Aorta (tissue), 5 donors: ENCODE measurements at regions of chr3 and their contacts with region 1.

Region 1: DNA sequence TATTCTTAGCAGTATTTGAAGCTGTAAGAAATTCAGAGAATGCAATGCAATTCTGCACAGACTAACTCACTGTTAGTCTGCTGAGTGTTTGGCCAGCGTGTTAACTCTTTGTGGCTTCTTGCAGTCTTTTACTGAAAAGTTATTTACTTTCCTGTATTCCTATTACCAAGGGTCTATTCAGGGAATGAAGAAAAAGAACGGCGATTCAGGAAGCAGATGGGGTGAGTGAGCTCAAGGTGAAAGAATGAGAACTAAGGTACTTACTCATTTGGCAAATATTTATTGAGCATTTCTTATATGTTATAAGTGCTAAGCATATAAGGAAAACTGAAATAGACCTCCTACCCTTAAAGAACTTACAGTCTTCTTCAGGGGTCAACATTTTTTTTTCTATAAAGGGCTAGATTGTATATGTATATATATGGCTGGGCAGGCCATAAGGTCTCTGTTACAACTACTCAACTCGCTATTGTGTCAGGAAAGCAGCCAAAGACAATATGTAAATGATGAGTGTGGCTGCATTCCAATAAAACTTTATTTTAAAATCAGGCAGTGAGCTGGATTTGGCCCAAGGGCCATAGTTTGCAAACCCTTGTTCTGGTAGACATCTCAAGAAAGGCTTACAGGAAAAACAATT is 271.9 kb upstream of the GADL1 start:
- DNase-seq: peak in 1 of 2 donors; percentile 58
- ATAC-seq: no peak
- H3K4me3 ChIP-seq: no peak overlapping the region
- H3K27ac ChIP-seq: peak overlapping the region; percentile 28 to 82
- H3K4me1 ChIP-seq: peaks cover 5 to 6% of the 10 kb centered on the region in 2 donors
- H3K27me3 ChIP-seq: no peaks in the 10 kb centered on the region

Region 2: GRCh38 chr3:30835667-30836066 is 330.7 kb before region 1 on chr3:
- intact Hi-C with region 1: no loop called
- DNase-seq: no peak
- ATAC-seq: no peak
- H3K4me3 ChIP-seq: no peak overlapping the region
- H3K27ac ChIP-seq: no peak overlapping the region
- H3K4me1 ChIP-seq: no peaks in the 10 kb centered on the region
- H3K27me3 ChIP-seq: no peaks in the 10 kb centered on the region

Region 3: GRCh38 chr3:31219131-31219843 is 52.9 kb after region 1 on chr3:
- intact Hi-C with region 1: no loop called
- DNase-seq: no peak
- ATAC-seq: no peak
- H3K4me3 ChIP-seq: no peak overlapping the region
- H3K27ac ChIP-seq: no peak overlapping the region
- H3K4me1 ChIP-seq: no peaks in the 10 kb centered on the region
- H3K27me3 ChIP-seq: no peaks in the 10 kb centered on the region

Region 4: GRCh38 chr3:31275038-31275562 is 108.7 kb after region 1 on chr3:
- intact Hi-C with region 1: loop called in 1 of 2 experiments (anchors 5 kb)
- DNase-seq: no peak
- ATAC-seq: peak; percentile 52
- H3K4me3 ChIP-seq: no peak overlapping the region
- H3K27ac ChIP-seq: peak overlapping the region; percentile 53 to 71
- H3K4me1 ChIP-seq: peaks cover 2 to 6% of the 10 kb centered on the region in 2 donors
- H3K27me3 ChIP-seq: no peaks in the 10 kb centered on the region

Region 5: GRCh38 chr3:31307131-31307785 is 140.9 kb after region 1 on chr3:
- intact Hi-C with region 1: no loop called
- DNase-seq: no peak
- ATAC-seq: no peak
- H3K4me3 ChIP-seq: no peak overlapping the region
- H3K27ac ChIP-seq: no peak overlapping the region
- H3K4me1 ChIP-seq: no peaks in the 10 kb centered on the region
- H3K27me3 ChIP-seq: no peaks in the 10 kb centered on the region

Region 6: DNA sequence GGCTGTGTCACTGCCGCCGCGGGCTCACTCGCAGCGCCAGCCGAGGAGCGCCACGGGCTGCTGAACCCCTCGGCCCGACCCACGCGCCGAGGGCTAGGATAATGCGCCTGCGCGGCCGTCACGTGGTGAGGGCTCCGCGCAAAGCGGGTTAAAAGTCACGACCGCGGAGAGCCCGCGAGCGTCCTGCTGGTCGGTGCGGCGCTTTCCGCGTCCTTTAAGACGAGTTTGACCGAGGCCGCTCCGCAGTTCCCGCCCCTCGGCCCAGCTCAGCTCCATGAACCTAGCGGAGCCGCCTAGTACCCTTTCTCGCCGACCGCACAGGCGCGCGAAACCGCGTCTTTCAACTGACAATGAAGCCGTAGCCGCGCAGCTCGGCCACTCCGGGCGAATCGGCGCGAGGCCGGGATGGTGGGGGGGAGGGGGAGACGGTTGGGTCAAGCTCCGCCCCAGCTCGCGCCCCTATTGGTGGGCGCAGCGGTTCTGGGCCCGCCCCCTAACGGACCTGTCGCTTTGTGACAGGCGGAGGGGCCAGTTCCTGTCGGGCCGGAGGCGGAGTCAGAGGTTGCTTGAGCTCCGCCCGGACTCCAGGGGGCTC is 365.7 kb after region 1 on chr3:
- intact Hi-C with region 1: loop called in 1 of 2 experiments (anchors 2 kb)
- DNase-seq: peak; percentile 99 to 100
- ATAC-seq: peak; percentile 98
- H3K4me3 ChIP-seq: peak overlapping the region; percentile 31 to 89
- H3K27ac ChIP-seq: peak overlapping the region in 1 of 2 donors; percentile 57
- H3K4me1 ChIP-seq: peaks cover 0 to 3% of the 10 kb centered on the region in 2 donors
- H3K27me3 ChIP-seq: no peaks in the 10 kb centered on the region